Activated T-helper 1 cell treated with anti-CD3 and anti-CD28 coated beads, Interleukin-12 subunit alpha, Interleukin-12 subunit beta, Interleukin-2, Interleukin-4 antibody, amounts not matched to agents 30 ng/mL and 10 ng/mL and 1 ng/mL, durations not matched to agents 14 hours and 24 hours and 36 hours (primary cell): ENCODE measurements at regions of chr2 and their contacts with region 1.

Region 1: DNA sequence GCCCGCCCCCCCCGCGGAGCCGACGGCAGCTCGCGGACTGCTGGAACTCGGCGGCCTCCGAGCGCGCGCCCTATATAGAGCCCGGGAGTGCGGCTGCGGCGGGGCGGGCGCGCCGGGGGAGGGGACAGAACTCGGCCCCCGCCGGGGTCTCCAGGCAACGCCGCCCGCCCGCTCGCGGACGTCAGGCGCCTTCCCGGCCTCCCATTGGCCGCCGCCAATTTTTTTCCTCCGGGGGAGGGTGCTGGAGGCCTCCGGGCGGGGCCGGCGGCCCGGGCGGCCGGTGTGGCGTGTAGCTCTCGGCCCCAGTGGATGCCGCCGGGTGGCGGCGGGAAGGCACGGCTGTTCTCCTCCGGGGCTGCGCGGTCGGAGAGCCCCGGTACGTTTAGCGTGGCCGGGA is at the start of gene ZFP36L2:
- DNase-seq: peak; percentile 95
- H3K4me3 Mint-ChIP-seq: peak within 1 kb of the TSS; percentile 92
- H3K27ac Mint-ChIP-seq: peak within 1 kb of the TSS; percentile 97
- H3K4me1 Mint-ChIP-seq: peaks cover 38% of the 10 kb centered on the region
- H3K27me3 Mint-ChIP-seq: no peaks in the 10 kb centered on the region
- total RNA-seq, gene ZFP36L2: 92.3 TPM in 2 replicates

Region 2: DNA sequence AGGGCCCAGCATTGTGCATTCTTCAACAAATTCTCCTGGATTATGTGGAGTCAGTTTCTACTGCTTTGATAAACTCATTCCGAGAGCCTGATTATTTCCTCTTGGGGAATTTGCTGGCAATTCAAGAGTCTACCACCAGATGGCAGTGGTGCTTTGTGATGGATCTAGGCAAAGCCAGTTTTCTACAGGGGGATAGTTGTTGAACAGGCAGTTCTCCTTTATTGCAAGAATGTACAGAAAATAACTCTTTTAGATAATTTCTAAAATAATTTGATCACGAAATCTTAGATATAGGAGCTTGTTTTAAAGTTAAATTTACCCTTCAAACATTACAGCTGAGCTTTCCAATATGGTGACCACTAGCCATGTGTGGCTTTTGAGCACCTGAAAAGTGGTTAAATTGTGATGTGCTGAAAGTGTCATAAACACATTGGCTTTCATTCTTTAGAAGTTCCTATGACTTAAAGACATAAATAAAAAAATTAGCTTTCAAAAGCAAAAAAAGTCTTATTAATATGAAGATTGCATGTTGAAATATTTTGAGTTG is 367.5 kb before region 1 on chr2:
- intact Hi-C with region 1: loop called (anchors 2 kb)
- DNase-seq: peak; percentile 33
- H3K4me3 Mint-ChIP-seq: no peak overlapping the region
- H3K27ac Mint-ChIP-seq: no peak overlapping the region
- H3K4me1 Mint-ChIP-seq: no peaks in the 10 kb centered on the region
- H3K27me3 Mint-ChIP-seq: no peaks in the 10 kb centered on the region

Region 3: DNA sequence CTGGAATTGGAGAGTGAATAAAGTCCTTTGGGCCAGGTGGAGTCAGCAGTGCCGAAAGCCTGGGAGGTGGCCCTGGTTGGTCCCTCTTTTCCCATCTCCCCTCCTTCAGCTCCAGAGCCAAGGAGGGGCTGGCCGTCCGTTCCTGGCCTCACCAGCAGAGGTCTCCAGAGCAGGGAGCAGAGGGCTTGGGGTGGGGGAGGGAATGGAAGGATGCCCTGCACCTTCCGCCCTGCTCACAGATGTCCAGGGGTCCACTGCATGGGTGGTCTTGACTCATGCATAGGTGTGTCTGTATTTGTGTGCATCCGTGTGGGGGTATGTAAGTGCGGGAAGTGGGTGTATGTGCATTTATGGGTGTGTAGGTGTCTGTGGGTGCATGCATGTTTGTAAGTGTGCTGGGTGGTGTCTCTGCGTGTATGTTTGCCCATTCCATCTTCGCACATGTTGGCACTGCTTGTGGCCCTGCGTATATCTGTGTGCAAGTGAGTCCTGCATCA is 202.0 kb before region 1 on chr2:
- intact Hi-C with region 1: loop called (anchors 1 kb)
- DNase-seq: no peak
- H3K4me3 Mint-ChIP-seq: no peak overlapping the region
- H3K27ac Mint-ChIP-seq: no peak overlapping the region
- H3K4me1 Mint-ChIP-seq: no peaks in the 10 kb centered on the region
- H3K27me3 Mint-ChIP-seq: no peaks in the 10 kb centered on the region

Region 4: DNA sequence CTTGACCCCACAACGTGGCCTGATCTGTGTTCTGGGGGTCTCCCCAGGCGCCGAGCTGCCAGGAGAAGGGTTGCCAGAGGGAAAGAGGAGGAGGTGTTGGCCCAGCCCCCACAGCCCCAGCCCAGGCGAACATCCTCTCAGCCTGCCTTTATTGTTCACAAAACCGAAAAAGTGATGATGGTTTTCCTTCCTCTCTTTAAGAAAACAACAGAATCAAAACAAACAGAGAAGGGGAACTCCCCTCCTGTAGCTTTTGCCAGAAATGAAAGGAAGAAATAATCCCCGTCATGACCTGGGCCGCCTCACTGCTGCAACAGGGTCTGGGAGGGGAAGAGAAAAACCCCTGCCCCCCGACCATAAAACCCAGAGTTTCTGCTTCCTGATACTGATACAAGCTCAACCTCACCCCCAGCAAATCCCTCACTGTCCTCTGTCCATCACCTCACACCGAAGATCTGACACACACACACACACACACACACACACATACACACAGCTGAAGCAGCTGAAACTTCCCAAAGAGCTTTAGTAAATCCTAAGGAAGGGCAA is 52.1 kb before region 1 on chr2:
- intact Hi-C with region 1: loop called (anchors 1 kb)
- DNase-seq: peak; percentile 76
- H3K4me3 Mint-ChIP-seq: peak overlapping the region; percentile 32
- H3K27ac Mint-ChIP-seq: peak overlapping the region; percentile 89
- H3K4me1 Mint-ChIP-seq: peaks cover 75% of the 10 kb centered on the region
- H3K27me3 Mint-ChIP-seq: no peaks in the 10 kb centered on the region

Region 5: DNA sequence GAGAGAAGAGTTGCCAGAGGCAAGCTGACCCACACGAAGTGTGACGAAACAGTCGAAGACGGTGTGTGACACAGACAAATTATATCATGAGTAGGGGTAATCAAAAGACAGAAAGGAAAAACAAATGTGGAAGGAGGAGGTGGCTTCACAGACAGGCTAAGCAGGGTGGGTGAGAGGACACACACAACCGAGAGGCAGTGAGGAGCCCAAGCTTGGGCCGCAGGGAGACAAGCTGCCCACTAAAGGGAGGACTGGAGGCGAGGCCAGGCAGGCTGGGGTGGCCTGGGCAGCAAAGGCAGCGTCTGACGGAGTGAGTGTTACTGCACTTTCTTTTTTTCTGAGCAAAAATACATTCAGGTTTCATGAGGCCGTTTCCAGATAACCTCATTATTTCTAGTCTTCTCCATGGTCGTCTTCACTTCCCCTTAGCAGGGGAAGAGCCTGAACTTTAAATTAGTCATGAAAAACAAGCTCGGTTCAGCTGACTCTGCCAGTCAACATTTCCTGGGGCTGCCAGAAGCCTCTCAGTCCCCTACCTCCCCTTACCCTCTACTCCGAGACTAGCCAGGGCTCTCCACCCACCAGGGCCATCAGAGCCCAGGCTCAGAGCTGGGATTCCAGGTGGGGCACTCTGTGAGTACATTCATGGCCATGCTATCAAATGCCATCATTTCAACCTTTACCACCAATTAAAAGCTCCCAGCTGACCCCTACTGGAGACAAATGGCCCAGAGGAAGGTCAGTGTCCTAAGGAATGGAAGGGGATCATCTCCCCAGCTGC is 13.6 kb after region 1 on chr2:
- intact Hi-C with region 1: no loop called
- DNase-seq: no peak
- H3K4me3 Mint-ChIP-seq: no peak overlapping the region
- H3K27ac Mint-ChIP-seq: no peak overlapping the region
- H3K4me1 Mint-ChIP-seq: peaks cover 8% of the 10 kb centered on the region
- H3K27me3 Mint-ChIP-seq: no peaks in the 10 kb centered on the region

Region 6: GRCh38 chr2:43426305-43427031 is 199.9 kb after region 1 on chr2:
- intact Hi-C with region 1: loop called (anchors 1 kb)
- DNase-seq: peak; percentile 75
- H3K4me3 Mint-ChIP-seq: peak overlapping the region; percentile 40
- H3K27ac Mint-ChIP-seq: peak overlapping the region; percentile 26
- H3K4me1 Mint-ChIP-seq: peaks cover 39% of the 10 kb centered on the region
- H3K27me3 Mint-ChIP-seq: peaks cover 2% of the 10 kb centered on the region

Region 7: GRCh38 chr2:43559391-43560230 is 333.1 kb after region 1 on chr2:
- intact Hi-C with region 1: loop called (anchors 1 kb)
- DNase-seq: no peak
- H3K4me3 Mint-ChIP-seq: peak overlapping the region; percentile 41
- H3K27ac Mint-ChIP-seq: peak overlapping the region; percentile 94
- H3K4me1 Mint-ChIP-seq: peaks cover 71% of the 10 kb centered on the region
- H3K27me3 Mint-ChIP-seq: no peaks in the 10 kb centered on the region

Region 8: GRCh38 chr2:44167940-44168680 is 941.6 kb after region 1 on chr2:
- intact Hi-C with region 1: loop called (anchors 1 kb)
- DNase-seq: peak; percentile 94
- H3K4me3 Mint-ChIP-seq: peak overlapping the region; percentile 97
- H3K27ac Mint-ChIP-seq: peak overlapping the region; percentile 99
- H3K4me1 Mint-ChIP-seq: peaks cover 41% of the 10 kb centered on the region
- H3K27me3 Mint-ChIP-seq: peaks cover 2% of the 10 kb centered on the region